Psoas muscle (tissue), 8 donors: ENCODE measurements at regions of chr9 and their contacts with region 1.

Region 1: DNA sequence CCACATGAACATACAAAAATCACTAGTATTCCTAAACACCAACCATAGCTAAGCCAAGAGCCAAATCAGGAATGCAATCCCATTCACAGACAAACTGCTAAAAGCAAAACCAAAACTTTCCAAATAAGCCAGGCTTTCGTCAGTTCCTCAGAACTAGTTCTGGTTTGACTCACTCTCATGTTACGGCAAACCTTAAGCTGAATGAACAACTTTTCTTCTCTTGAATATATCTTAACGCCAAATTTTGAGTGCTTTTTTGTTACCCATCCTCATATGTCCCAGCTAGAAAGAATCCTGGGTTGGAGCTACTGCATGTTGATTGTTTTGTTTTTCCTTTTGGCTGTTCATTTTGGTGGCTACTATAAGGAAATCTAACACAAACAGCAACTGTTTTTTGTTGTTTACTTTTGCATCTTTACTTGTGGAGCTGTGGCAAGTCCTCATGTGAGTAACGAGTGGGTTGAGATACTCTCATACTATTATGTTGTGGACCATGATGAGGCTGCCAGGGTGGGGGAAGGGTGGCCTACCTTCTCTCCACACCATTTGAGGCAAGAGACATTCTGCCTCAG is at the start of gene PDCD1LG2:
- DNase-seq: no peak
- ATAC-seq: peak in 2 of 4 donors; percentile 45 to 49
- H3K4me3 ChIP-seq: peak within 1 kb of the TSS; percentile 55
- H3K27ac ChIP-seq: peak within 1 kb of the TSS; percentile 54
- H3K4me1 ChIP-seq: peaks cover 21% of the 10 kb centered on the region
- H3K27me3 ChIP-seq: no peaks in the 10 kb centered on the region
- CTCF ChIP-seq: no peak
- total RNA-seq, gene PDCD1LG2: 0.50 to 1.3 (median 0.86) TPM

Region 2: DNA sequence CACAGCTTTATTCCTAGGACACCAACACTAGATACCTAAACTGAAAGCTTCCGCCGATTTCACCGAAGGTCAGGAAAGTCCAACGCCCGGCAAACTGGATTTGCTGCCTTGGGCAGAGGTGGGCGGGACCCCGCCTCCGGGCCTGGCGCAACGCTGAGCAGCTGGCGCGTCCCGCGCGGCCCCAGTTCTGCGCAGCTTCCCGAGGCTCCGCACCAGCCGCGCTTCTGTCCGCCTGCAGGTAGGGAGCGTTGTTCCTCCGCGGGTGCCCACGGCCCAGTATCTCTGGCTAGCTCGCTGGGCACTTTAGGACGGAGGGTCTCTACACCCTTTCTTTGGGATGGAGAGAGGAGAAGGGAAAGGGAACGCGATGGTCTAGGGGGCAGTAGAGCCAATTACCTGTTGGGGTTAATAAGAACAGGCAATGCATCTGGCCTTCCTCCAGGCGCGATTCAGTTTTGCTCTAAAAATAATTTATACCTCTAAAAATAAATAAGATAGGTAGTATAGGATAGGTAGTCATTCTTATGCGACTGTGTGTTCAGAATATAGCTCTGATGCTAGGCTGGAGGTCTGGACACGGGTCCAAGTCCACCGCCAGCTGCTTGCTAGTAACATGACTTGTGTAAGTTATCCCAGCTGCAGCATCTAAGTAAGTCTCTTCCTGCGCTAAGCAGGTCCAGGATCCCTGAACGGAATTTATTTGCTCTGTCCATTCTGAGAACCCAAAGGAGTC is 59.9 kb before region 1 on chr9 and contains the start of gene CD274:
- intact Hi-C with region 1: loop called (anchors 5 kb)
- DNase-seq: peak; percentile 89 to 94
- ATAC-seq: peak; percentile 98 to 99 (median 99)
- H3K4me3 ChIP-seq: peak within 1 kb of the TSS; percentile 70
- H3K27ac ChIP-seq: peak within 1 kb of the TSS; percentile 73
- H3K4me1 ChIP-seq: peaks cover 3% of the 10 kb centered on the region
- H3K27me3 ChIP-seq: no peaks in the 10 kb centered on the region
- CTCF ChIP-seq: peak; percentile 71
- total RNA-seq, gene CD274: 0.93 to 4.6 (median 2.1) TPM

Region 3: GRCh38 chr9:5575000-5575399 is 64.6 kb after region 1 on chr9:
- intact Hi-C with region 1: loop called in 1 of 2 experiments (anchors 10 kb)
- DNase-seq: no peak
- ATAC-seq: no peak
- H3K4me3 ChIP-seq: no peak overlapping the region
- H3K27ac ChIP-seq: no peak overlapping the region
- H3K4me1 ChIP-seq: peaks cover 22% of the 10 kb centered on the region
- H3K27me3 ChIP-seq: no peaks in the 10 kb centered on the region
- CTCF ChIP-seq: no peak